ENCODE measurements at regions of chr21 and their contacts with region 1.

Region 1: DNA sequence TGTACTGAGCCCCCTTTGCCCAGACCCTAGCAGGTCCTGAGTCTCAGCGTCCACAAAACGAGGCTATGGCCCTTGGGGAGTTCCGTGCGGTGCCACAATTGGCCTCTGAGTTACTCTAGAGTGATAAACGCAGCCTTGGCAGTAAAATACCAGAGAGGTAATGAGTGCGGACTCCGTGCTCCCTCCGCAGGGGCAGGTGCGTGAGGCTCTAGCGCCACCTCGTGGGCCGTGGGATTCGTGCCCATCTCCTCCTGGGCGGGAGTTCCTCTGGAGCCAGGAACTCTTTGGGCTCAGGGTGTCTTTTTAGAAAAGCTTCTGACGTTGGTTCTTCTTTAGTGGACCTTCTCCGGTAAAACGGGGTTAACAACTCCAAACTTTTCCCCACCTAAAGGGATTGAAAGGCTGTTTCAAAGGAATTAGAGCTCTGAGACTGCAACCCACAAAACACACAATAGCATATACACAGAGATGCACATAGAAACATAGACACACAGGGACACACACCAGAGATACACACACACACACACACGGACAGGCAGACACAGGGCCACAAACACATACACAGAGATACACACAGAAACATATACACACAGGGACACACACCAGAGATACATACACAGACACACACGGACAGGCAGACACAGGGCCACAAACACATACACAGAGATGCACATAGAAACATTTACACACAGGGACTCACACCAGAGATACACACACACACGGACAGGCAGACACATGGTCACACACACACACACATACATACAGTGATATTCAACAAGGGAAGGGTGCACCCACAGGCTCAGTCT is 99.4 kb downstream of the KCNJ15 start:
- DNase-seq: peak; percentile 83 to 93 (median 90)
- ATAC-seq: peak; percentile 96
- H3K4me3 ChIP-seq: no peak overlapping the region
- H3K27ac ChIP-seq: no peak overlapping the region
- H3K4me1 ChIP-seq: peaks cover 0 to 7% of the 10 kb centered on the region in 2 experiments; a peak in 2 of 5 replicates
- H3K27me3 ChIP-seq: peaks cover 0 to 11% of the 10 kb centered on the region in 2 experiments; a peak in 3 of 5 replicates
- CTCF ChIP-seq: peak; percentile 95 to 99 (median 98)
- EP300 ChIP-seq: no peak
- POLR2A ChIP-seq: no peak
- RAD21 ChIP-seq: peak; percentile 94 to 98

Region 2: DNA sequence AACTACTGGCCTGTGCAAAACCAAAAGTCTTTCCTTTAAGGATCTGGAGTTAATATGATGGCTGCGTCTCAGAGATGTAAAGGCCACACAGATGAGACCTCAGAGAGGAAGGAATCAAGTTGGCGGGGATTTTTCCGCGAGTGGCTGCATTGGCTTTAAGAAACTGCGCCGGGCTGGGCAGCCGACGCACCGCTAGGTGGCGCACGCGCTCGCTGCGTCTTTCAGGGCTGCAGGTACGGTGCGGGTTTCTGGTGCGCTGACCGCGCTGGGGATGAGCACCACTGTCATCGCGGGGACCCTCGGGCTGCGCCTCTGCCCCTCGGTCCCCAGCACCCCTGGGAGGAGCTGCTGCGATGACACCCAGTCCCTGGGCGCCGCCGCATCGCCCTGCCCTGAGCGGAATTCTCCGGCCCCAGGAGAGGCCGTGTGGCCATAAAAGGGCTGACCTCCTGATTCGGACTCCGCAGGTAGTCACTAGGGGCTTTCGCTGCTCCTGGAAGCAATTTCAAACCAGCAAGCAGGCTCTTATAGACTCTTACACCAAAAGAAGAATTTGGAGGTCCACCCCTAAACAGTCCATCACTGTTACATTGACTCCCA is 680.9 kb before region 1 on chr21:
- CTCF ChIA-PET with region 1: interaction called, 5 read pairs
- POLR2A ChIA-PET with region 1: interaction called, 4 read pairs
- in situ Hi-C with region 1: no loop called
- intact Hi-C with region 1: loop called (anchors 10 kb)
- DNase-seq: peak; percentile 73 to 83 (median 80)
- ATAC-seq: peak; percentile 98
- H3K4me3 ChIP-seq: no peak overlapping the region
- H3K27ac ChIP-seq: no peak overlapping the region
- H3K4me1 ChIP-seq: peaks cover 0 to 5% of the 10 kb centered on the region in 2 experiments; a peak in 2 of 5 replicates
- H3K27me3 ChIP-seq: peaks cover 11 to 42% of the 10 kb centered on the region in 2 experiments
- CTCF ChIP-seq: peak; percentile 85 to 97 (median 90)
- EP300 ChIP-seq: no peak
- POLR2A ChIP-seq: no peak
- RAD21 ChIP-seq: peak; percentile 58 to 80

Region 3: GRCh38 chr21:37758982-37759381 is 597.2 kb before region 1 on chr21:
- CTCF ChIA-PET with region 1: no interaction called
- POLR2A ChIA-PET with region 1: no interaction called
- in situ Hi-C with region 1: no loop called
- intact Hi-C with region 1: loop called (anchors 2 kb)
- DNase-seq: peak; percentile 46 to 65 (median 52)
- ATAC-seq: peak; percentile 90
- H3K4me3 ChIP-seq: no peak overlapping the region
- H3K27ac ChIP-seq: no peak overlapping the region
- H3K4me1 ChIP-seq: no peaks in the 10 kb centered on the region
- H3K27me3 ChIP-seq: peaks cover 5 to 54% of the 10 kb centered on the region in 2 experiments; a peak in 4 of 5 replicates
- CTCF ChIP-seq: peak; percentile 64 to 71 (median 69)
- EP300 ChIP-seq: no peak
- POLR2A ChIP-seq: no peak
- RAD21 ChIP-seq: peak; percentile 53 to 73

Region 4: DNA sequence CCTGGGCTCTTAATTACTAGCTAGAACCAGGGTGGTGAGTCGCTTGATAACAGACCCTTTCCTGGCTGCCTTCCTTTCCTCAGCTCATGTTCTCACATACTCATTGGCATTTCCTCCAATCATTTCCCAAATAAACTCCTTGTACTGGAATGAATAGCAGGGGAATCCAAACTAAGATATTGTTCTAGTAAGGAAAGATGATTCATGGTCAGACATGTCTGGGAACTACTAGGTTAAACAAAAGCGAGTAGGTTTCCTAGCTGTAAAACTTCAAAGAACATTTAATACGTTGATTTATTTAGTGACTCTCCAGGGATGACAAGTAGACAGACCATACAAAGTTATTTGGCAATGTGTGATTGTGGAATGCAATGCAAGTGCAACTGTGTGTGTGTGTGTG is 318.8 kb before region 1 on chr21:
- CTCF ChIA-PET with region 1: no interaction called
- POLR2A ChIA-PET with region 1: no interaction called
- in situ Hi-C with region 1: no loop called
- intact Hi-C with region 1: loop called (anchors 5 kb)
- DNase-seq: no peak
- ATAC-seq: no peak
- H3K4me3 ChIP-seq: no peak overlapping the region
- H3K27ac ChIP-seq: no peak overlapping the region
- H3K4me1 ChIP-seq: peaks cover 0 to 5% of the 10 kb centered on the region in 2 experiments; a peak in 1 of 5 replicates
- H3K27me3 ChIP-seq: no peaks in the 10 kb centered on the region
- CTCF ChIP-seq: no peak
- EP300 ChIP-seq: no peak
- POLR2A ChIP-seq: no peak
- RAD21 ChIP-seq: no peak

Region 5: DNA sequence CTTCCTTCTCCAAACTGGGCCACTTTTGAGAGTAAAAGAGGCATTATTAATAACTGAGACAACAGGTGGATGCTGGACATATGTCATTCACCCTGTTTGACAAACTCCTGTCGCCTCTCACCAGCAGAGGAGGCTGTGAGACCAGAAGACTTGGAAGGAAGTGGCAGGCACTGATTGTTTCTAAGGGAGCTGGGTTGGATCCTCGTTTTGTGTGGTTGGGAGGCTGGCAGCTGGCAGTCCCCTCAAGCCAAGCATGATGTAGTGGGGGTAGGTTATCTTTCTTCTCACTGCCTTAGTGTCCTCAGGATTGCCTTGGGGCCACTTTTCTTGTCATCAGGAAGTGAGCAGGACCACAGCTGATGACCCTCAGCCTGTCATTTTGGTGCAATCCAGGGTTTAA is 185.9 kb before region 1 on chr21:
- CTCF ChIA-PET with region 1: interaction called, 8 read pairs
- POLR2A ChIA-PET with region 1: no interaction called
- in situ Hi-C with region 1: no loop called
- intact Hi-C with region 1: loop called (anchors 5 kb)
- DNase-seq: peak in 1 of 4 experiments; percentile 16
- ATAC-seq: no peak
- H3K4me3 ChIP-seq: no peak overlapping the region
- H3K27ac ChIP-seq: no peak overlapping the region
- H3K4me1 ChIP-seq: no peaks in the 10 kb centered on the region
- H3K27me3 ChIP-seq: 0 out of 5 replicates have a peak, but pooled peaks cover 0 to 3% of the 10 kb centered on the region in 2 experiments
- CTCF ChIP-seq: peak; percentile 30 to 53 (median 33); a peak in 5 of 6 replicates
- EP300 ChIP-seq: no peak
- POLR2A ChIP-seq: no peak
- RAD21 ChIP-seq: peak in 1 of 2 experiments; percentile 35; a peak in 1 of 4 replicates